A549 (cell line): ENCODE measurements at regions of chr22 and their contacts with region 1.

Region 1: GRCh38 chr22:37472418-37473006 is 13.7 kb downstream of the MFNG start:
- DNase-seq: peak; percentile 55 to 80
- ATAC-seq: peak; percentile 53 to 84; a peak in 4 of 6 replicates
- H3K4me3 ChIP-seq: no peak overlapping the region
- H3K27ac ChIP-seq: no peak overlapping the region
- H3K4me1 ChIP-seq: no peaks in the 10 kb centered on the region
- CTCF ChIP-seq: peak; percentile 55
- EP300 ChIP-seq: no peak
- POLR2A ChIP-seq: no peak
- RAD21 ChIP-seq: peak; percentile 60 to 63

Region 2: DNA sequence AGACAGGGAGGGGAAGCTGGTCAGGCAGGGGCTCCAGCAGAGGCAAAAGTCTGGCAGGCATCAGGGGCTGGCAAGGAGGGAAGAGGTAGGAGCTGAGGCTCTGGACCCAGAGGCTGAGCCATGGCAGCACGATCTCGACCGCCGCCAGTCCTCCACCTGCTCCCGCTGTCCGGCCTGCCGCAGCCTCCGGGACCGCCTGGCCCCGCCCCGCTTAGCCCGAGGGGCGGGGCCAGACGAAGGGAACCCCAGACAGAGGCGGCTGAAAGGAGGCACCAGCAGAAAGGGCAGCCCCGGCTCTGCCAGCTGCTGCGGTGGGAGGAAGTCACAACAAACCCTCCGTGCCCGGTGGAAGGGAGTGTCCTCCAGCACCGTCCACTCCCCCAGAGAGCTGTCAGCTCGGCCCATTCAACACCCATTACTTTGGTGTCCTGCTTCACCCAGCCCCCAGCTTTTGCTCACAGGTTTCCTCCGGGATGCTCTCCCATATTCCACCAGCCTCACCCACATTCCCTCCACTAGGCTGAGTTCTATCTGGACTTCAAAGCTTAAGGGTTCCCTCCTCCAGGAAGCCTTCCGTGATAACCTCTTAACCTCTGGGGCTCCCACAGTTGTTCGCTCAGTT is 13.8 kb after region 1 on chr22 and contains the start of gene MFNG:
- CTCF ChIA-PET with region 1: interaction called, 13 read pairs
- POLR2A ChIA-PET with region 1: no interaction called
- DNase-seq: peak; percentile 54
- ATAC-seq: peak; percentile 59 to 88
- H3K4me3 ChIP-seq: no peak within 1 kb of the TSS
- H3K27ac ChIP-seq: peak within 1 kb of the TSS in 1 of 2 experiments; percentile 67; a peak in 2 of 6 replicates
- H3K4me1 ChIP-seq: peaks cover 18% of the 10 kb centered on the region
- CTCF ChIP-seq: no peak
- EP300 ChIP-seq: no peak
- POLR2A ChIP-seq: no peak
- RAD21 ChIP-seq: no peak
- polyA plus RNA-seq, gene MFNG: 1.2 and 2.0 TPM in 2 replicates

Region 3: GRCh38 chr22:37492428-37493344 is 20.2 kb after region 1 on chr22:
- CTCF ChIA-PET with region 1: interaction called, 42 read pairs
- POLR2A ChIA-PET with region 1: no interaction called
- DNase-seq: peak; percentile 62 to 71
- ATAC-seq: peak; percentile 59 to 79
- H3K4me3 ChIP-seq: no peak overlapping the region
- H3K27ac ChIP-seq: peak overlapping the region in 1 of 2 experiments; percentile 80; a peak in 4 of 6 replicates
- H3K4me1 ChIP-seq: peaks cover 34% of the 10 kb centered on the region
- CTCF ChIP-seq: peak; percentile 39; the same call in 2 of the 3 replicates
- EP300 ChIP-seq: no peak
- POLR2A ChIP-seq: no peak
- RAD21 ChIP-seq: peak; percentile 12 to 19; a peak in 1 of 5 replicates

Region 4: GRCh38 chr22:37538590-37539357 is 66.3 kb after region 1 on chr22:
- CTCF ChIA-PET with region 1: interaction called, 13 read pairs
- POLR2A ChIA-PET with region 1: no interaction called
- DNase-seq: peak; percentile 88 to 91
- ATAC-seq: peak; percentile 99 to 100
- H3K4me3 ChIP-seq: no peak overlapping the region
- H3K27ac ChIP-seq: peak overlapping the region; percentile 54 to 75; a peak in 5 of 6 replicates
- H3K4me1 ChIP-seq: peaks cover 24% of the 10 kb centered on the region
- CTCF ChIP-seq: peak; percentile 85
- EP300 ChIP-seq: no peak
- POLR2A ChIP-seq: no peak
- RAD21 ChIP-seq: peak; percentile 96 to 97

Region 5: GRCh38 chr22:37566903-37567820 is 94.7 kb after region 1 on chr22:
- CTCF ChIA-PET with region 1: interaction called, 36 read pairs
- POLR2A ChIA-PET with region 1: no interaction called
- DNase-seq: peak; percentile 63 to 68
- ATAC-seq: peak; percentile 38 to 71; a peak in 5 of 6 replicates
- H3K4me3 ChIP-seq: no peak overlapping the region
- H3K27ac ChIP-seq: 0 out of 6 replicates have a peak overlapping the region, but pooled peaks of 1 of the 2 experiments have one; percentile 11
- H3K4me1 ChIP-seq: peaks cover 63% of the 10 kb centered on the region
- CTCF ChIP-seq: peak; percentile 74
- EP300 ChIP-seq: no peak
- POLR2A ChIP-seq: no peak
- RAD21 ChIP-seq: peak; percentile 83